ENCODE measurements at regions of chr2 and their contacts with region 1.

Region 1: DNA sequence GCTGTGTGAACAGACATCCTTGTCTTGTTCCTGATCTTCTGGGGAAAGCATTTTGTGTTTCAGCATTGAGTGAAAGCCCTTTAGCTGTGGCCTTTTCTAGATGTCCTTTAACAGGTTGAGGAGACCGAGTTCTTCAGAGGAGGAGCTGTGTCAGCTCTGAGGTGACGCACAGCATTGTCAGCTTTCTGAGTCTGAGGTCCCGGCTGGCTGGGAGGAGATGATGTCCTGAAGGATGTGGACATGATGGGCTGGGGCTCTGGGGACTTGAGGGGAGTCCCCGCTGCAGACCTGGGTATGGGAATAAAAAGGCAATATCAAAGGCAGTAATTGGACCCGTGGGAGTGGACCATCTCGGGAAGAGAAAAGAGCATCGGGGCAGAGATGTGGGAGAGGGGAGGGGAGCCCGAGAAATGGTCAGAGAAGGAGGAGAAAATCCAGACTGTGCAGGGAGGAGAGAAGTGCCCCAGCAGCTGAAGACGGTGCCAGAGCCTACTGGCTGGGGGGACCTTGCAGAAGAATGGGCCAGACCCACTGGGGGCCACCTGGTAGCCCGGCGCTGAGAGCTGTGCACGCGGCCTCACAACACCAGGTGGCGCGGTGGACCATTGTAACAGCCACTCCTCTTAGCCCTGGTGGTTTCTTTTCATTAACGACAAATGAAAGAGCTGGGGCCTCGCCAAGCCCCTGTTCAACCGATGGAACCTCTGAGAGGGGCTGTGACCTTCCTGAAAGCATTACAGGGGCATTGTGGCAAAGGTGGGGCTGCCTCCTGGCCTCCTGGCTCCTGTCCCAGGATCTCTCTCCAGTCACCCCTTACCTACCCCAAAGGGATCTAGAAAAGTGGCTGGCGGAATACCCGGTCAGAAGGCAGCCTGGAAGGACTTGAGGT is 61.6 kb downstream of the ST3GAL5 start:
- DNase-seq: peak; percentile 89
- ATAC-seq: peak; percentile 98
- H3K4me3 Mint-ChIP-seq: no peak overlapping the region
- H3K27ac Mint-ChIP-seq: peak overlapping the region; percentile 74
- H3K4me1 Mint-ChIP-seq: peaks cover 35% of the 10 kb centered on the region
- H3K27me3 Mint-ChIP-seq: peaks cover 18% of the 10 kb centered on the region

Region 2: DNA sequence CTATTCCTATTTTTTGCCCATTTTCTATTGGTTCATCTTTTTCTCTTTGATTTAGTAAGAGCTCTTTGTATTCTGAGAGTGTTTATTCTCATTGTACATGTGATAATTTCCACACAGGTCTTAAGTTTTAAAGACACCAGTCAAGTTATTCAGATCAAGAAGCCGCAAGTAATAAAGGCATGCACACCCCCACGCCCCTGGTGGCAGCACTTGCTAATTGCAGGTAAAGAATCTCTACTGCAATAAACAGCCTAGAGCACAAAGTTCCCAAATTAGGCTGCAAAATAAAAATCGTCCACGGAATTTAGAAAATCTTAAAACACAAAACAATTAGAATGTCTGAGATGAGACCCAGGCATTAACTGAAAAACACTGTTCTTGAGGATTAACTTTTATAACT is 16.3 kb after region 1 on chr2:
- CTCF ChIA-PET with region 1: interaction called, 99 read pairs
- DNase-seq: no peak
- ATAC-seq: no peak
- H3K4me3 Mint-ChIP-seq: no peak overlapping the region
- H3K27ac Mint-ChIP-seq: no peak overlapping the region
- H3K4me1 Mint-ChIP-seq: peaks cover 44% of the 10 kb centered on the region
- H3K27me3 Mint-ChIP-seq: no peaks in the 10 kb centered on the region

Region 3: GRCh38 chr2:85878719-85879385 is 51.6 kb after region 1 on chr2:
- CTCF ChIA-PET with region 1: interaction called, 187 read pairs
- DNase-seq: no peak
- ATAC-seq: no peak
- H3K4me3 Mint-ChIP-seq: no peak overlapping the region
- H3K27ac Mint-ChIP-seq: no peak overlapping the region
- H3K4me1 Mint-ChIP-seq: peaks cover 52% of the 10 kb centered on the region
- H3K27me3 Mint-ChIP-seq: no peaks in the 10 kb centered on the region

Region 4: DNA sequence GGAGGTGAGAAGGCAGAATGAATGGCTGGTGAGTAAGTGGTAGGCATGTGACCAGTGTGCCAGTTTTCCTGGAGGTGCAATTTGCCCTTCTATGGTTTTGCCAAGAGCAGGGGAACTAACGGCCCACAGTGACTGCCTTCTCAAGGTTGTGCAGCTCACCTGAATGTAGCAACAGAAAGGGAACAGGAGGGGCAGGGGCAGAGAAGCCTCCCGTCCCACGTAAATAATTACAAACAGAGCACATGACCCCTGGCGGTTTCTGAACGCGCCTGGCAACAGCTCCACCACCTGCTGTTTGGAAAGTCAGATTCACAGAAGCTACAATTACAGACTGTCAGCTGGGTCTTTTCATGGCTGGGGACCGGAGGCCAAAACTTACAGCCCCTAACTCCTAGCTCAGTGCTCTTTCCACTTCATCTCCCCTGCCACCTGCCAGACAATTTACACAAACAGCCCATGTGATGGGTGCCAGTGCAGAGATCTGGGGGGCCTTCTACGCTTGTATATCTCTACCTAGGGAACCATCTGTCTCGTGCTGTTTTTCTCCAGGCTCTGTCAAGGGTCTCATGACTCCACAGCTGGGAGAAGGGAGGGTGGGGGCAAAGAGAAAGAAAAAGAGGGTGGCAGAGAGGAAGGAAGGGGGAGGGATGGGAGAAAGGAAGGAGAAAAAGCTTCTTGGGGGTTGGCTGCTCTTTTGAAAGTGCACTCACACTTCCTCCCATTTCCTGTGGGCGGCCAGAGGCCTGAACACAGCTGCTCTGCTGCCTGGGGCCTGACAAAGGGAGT is 208.8 kb after region 1 on chr2:
- CTCF ChIA-PET with region 1: interaction called, 90 read pairs
- DNase-seq: peak; percentile 89
- ATAC-seq: peak; percentile 48
- H3K4me3 Mint-ChIP-seq: peak overlapping the region; percentile 63
- H3K27ac Mint-ChIP-seq: peak overlapping the region; percentile 95
- H3K4me1 Mint-ChIP-seq: peaks cover 72% of the 10 kb centered on the region
- H3K27me3 Mint-ChIP-seq: no peaks in the 10 kb centered on the region

Region 5: DNA sequence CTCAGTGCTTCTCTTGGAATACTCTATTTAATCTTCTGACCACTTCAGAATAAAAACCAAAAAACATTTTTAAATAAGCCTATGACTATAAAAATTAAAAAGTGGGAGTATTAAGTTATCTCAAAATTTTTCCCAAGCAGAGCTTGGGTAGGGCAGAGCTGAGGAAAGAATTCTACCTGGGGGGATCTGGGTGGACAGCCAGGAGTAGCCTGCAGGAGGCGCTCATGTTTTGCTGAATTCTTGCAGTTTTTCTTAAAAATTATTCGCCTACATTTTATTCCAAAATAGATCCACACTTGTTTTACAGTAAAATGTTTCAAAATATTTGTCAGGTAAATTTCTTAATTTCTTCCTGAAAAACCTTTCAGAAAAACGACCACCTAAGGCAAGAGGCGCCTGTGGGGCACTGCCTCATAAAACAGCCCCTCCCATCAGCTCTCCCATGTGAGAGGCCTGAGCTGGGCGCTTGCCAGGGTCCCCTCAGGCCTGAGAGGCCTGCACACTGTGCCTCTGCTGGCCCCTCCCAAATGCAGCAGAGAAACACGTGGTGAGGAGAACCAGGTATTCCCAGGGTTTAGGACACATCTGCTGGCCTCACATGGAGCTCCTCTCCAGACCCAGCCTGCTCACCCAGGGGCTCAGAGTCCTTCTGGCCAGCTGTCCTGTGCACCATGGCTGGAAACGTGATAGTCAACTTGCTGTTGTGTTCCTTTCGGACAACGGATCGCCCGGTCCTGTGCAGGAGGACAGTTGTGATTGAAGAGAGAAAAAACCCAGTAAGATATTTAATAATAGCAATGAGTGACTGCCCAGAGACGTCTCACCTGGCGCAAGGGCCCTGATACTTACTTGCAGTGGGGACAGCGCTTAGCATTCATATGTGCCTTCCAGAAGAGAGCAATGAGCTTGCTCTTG is 261.0 kb after region 1 on chr2:
- CTCF ChIA-PET with region 1: interaction called, 391 read pairs
- DNase-seq: no peak
- ATAC-seq: no peak
- H3K4me3 Mint-ChIP-seq: no peak overlapping the region
- H3K27ac Mint-ChIP-seq: no peak overlapping the region
- H3K4me1 Mint-ChIP-seq: peaks cover 2% of the 10 kb centered on the region
- H3K27me3 Mint-ChIP-seq: no peaks in the 10 kb centered on the region